ENCODE measurements at regions of chr1 and their contacts with region 1.

Region 1: DNA sequence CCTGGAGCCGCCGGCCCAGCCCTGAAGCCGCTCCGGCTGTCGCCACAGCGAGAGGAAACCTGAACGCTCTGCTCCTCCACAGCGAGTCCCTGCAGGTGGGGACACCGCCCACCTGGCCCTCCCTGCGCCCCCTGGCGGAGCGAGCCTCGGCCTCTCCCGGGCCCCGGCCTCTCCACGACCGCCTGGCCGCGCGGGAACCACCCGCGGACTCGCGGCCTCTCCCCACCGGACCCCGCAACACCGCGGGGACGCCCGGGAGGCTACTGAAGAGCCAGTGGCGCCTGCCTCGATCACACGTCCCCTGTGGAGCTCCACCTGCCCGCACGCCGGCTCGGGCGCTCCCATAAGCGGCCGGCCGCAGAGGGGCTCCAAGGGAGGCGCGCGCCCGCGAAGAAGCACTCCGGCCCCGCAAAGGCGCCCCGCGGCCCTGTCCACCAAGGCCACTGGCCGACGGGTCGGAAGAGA is 109.6 kb downstream of the KCNN3 start:
- DNase-seq: peak; percentile 90
- ATAC-seq: peak; percentile 57
- H3K4me3 Mint-ChIP-seq: peak overlapping the region; percentile 69
- H3K27ac Mint-ChIP-seq: peak overlapping the region; percentile 97
- H3K4me1 Mint-ChIP-seq: peaks cover 51% of the 10 kb centered on the region
- H3K27me3 Mint-ChIP-seq: no peaks in the 10 kb centered on the region

Region 2: DNA sequence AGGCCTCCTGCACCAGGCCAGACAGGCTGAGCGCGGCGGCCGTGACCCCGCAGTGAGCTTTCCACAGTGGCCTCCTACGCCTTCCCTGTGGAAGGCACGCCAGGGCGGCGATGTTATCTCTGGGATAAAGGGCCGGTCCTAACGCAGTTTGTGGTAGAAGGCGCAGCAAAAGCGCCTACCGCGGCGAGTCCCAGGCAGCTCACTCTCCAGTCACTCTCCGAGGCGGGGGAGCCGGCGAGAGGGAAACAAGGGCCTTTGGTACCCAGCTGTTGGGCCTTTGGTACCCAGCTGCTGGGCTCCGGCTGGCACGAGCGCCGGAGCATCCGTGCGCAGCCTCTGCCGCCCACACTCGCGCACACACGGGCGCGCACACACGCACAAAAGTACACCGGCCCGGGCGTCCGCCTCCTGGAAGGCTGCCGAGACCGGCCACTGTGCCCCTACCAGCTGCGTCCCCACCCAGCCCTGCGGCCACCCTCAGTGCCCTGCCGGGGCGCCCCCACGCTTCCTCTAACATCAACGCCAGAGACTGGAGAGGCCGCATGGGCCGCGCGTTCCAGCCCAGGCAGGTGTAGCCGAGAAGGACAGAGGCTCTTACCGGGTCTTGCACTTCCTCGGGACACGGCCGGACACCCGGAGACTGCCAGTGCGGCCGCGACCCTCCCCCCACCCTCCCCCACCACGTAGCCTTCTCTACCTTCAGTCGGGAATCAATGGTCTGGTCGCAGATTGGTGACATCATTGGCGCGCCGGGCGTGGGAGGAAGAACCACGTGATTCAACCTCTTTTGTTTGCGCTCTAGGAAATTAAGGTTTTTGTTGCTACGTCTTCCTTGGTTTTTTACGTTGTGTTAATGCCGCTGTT is 133.0 kb before region 1 on chr1:
- CTCF ChIA-PET with region 1: no interaction called
- POLR2A ChIA-PET with region 1: no interaction called
- intact Hi-C with region 1: loop called in 1 of 2 experiments (anchors 5 kb)
- DNase-seq: peak; percentile 96
- ATAC-seq: peak; percentile 74
- H3K4me3 Mint-ChIP-seq: peak overlapping the region; percentile 99
- H3K27ac Mint-ChIP-seq: peak overlapping the region; percentile 100
- H3K4me1 Mint-ChIP-seq: peaks cover 47% of the 10 kb centered on the region
- H3K27me3 Mint-ChIP-seq: peaks cover 1% of the 10 kb centered on the region

Region 3: DNA sequence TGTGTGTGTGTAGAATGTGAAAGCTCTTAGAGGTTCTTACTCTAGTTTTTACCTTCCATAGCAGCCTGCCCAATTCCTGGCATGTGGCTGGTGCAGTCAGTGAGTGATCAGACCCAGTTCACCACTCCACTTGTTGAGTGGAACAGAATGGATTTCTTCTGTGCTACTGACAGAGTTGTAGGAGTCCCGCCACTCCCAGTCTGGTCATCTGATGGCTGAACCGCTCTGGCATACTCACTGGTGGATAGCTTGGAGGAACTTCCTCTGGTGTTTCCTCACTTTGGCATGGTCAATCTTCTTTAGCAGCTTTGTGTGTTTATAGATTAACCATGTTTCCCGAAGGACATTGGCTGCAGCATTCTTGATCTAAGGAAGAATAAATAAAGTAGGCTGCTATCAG is 45.9 kb before region 1 on chr1:
- CTCF ChIA-PET with region 1: no interaction called
- POLR2A ChIA-PET with region 1: no interaction called
- intact Hi-C with region 1: loop called in 1 of 2 experiments (anchors 1 kb)
- DNase-seq: peak; percentile 32
- ATAC-seq: peak; percentile 71
- H3K4me3 Mint-ChIP-seq: no peak overlapping the region
- H3K27ac Mint-ChIP-seq: no peak overlapping the region
- H3K4me1 Mint-ChIP-seq: peaks cover 3% of the 10 kb centered on the region
- H3K27me3 Mint-ChIP-seq: no peaks in the 10 kb centered on the region

Region 4: DNA sequence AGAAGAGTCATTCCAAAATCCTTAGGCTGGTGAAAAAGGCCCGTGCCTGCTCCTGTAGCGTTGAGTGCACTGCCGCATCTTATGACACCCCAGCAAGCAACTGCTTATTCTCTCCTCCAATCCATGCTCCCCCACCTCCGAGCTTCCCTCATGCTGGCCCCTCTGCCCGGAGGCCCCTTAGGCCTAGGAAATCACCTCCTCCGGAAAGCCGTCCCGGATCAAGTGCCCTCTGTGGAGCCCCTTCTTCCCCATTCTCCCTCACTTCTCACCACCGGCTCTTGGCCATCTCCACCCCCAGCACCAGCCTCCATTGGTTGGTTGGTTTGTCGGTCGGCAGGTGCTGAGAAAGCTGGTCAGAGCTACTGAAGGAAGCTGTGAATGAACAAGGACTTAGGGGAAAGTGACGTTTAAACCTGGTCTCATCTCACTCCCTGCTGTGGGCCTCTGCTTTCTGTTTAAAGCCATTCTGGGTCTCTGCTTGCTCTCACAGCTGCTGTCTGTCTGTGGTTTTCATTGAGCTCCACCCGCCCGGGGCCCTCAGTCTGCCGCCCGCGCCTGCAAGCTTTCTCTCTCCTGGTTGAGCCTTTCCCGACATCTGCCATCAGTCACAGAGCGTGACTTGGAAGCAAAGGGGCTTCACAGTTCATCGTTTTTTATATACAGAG is 12.6 kb before region 1 on chr1:
- CTCF ChIA-PET with region 1: interaction called, 75 read pairs
- POLR2A ChIA-PET with region 1: interaction called, 6 read pairs
- intact Hi-C with region 1: loop called in 1 of 2 experiments (anchors 1 kb)
- DNase-seq: peak; percentile 80
- ATAC-seq: peak; percentile 78
- H3K4me3 Mint-ChIP-seq: peak overlapping the region; percentile 80
- H3K27ac Mint-ChIP-seq: peak overlapping the region; percentile 98
- H3K4me1 Mint-ChIP-seq: peaks cover 80% of the 10 kb centered on the region
- H3K27me3 Mint-ChIP-seq: no peaks in the 10 kb centered on the region

Region 5: DNA sequence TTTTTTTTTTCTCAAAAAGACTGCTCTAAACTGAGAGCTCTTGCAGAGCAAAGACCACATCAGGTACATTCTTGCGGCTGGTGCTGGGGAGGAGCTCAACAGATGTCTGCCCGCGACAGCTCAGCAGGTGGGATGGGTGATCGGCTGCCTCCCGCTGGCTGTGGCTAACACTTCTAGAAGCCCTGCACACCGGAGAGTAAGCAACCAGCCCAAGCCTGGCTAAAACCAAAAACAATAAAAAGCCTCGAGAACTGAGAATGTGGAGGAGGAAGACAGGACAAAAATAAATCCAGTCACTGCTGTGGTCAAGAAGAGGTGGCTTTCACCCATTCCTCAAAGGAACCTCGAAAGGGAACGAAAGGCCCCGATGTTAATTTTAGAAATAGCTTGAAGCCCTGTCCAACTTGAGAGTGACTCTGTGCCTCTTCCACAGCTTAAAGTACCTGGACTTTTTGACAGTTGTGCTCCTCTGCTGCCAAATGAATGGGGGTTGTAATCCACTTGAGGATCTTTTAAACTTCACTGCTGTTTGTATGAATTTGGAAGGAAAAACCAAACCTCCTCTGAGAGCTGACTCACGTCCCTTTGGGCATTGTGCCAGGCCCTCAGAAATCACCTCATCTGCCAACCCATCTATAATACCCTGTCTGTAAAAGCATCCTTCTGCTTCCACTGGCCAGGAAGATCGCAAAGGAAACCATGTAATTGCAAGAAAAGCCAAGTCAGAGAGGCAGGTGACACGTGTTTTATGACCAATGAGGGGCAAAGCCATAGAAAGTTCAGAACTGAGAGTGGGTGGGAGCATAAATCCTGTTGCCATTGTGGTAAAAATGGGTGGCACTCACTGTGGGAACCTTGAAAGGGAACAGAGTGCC is 31.0 kb after region 1 on chr1:
- CTCF ChIA-PET with region 1: interaction called, 6 read pairs
- POLR2A ChIA-PET with region 1: no interaction called
- intact Hi-C with region 1: loop called (anchors 1 kb)
- DNase-seq: peak; percentile 92
- ATAC-seq: peak; percentile 93
- H3K4me3 Mint-ChIP-seq: peak overlapping the region; percentile 51
- H3K27ac Mint-ChIP-seq: peak overlapping the region; percentile 86
- H3K4me1 Mint-ChIP-seq: peaks cover 43% of the 10 kb centered on the region
- H3K27me3 Mint-ChIP-seq: no peaks in the 10 kb centered on the region

Region 6: DNA sequence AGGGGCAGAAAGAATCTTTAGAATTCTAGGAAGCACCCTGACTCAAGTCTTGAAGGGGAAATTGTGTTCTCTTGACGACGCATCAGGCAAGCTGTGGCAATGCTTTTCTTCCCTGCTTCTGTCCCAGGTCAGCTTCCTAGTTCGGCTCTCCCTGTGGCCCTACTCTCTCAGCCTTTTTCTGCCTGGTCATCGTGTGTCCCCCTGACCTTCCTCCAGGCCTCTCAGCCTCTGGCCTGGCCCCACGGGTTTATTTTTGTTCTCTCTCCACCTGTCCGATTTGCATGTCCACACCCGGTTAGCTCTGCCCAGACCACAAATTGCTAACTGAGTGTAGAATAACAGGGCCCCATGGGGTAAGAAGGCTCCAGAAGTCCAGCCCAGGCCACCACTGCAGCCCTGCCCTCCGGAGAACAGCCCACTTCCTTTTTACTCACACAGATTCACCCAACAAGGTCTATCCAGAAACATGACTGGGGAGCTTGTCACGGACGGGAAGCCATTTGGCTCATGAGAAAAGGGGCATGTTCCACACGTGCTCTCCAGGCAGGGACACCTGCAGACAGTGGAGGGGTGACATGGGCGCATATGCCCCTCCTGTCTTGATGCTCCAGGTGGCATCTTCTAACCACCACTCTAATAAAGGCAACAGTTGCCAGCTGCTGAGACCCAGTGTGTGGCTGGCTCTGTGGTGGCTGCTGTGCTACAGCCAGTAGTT is 99.8 kb after region 1 on chr1:
- CTCF ChIA-PET with region 1: no interaction called
- POLR2A ChIA-PET with region 1: no interaction called
- intact Hi-C with region 1: no loop called
- DNase-seq: peak; percentile 36
- ATAC-seq: peak; percentile 7
- H3K4me3 Mint-ChIP-seq: no peak overlapping the region
- H3K27ac Mint-ChIP-seq: peak overlapping the region; percentile 82
- H3K4me1 Mint-ChIP-seq: peaks cover 52% of the 10 kb centered on the region
- H3K27me3 Mint-ChIP-seq: peaks cover 3% of the 10 kb centered on the region